ENCODE measurements at regions of chr18 and their contacts with region 1.

Region 1: DNA sequence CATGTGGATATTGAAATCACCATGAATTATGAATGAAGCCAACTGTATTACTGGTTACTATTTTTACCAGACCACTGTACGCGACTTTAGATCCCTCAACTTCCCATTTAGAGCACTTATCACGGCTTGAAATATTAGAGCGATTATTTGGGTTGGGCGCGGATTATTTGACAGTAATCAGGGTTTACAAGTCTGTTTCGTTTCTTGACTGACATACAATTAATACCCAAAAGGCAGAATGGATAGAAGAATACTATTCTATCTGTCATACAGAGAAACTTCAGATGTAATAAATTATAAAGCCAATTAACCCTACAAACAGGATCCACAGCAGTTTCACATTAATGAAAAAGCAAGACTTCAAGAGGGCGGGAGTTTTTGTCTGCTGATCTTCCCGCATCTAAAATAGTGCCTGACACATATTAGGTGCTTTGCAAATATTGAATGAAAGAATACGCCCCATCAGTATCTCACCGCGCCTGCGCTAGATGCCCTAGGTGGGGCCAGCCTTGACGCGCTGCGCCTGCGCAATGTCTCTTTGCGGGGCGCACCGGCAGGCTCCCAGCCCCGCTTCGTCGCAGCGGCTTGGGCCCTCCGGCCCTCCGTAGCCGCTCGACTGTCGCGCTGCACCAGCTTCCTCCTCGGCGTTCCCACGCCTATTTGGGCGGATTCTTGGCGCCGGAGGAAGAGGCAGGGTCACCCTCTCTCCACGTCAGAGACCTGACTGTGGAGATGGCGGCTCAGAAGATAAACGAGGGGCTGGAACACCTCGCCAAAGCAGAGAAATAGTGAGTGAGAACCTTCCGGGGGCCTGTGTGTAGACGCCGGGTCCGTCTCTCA is at the start of gene NAPG:
- DNase-seq: peak; percentile 63 to 94
- H3K4me3 ChIP-seq: peak within 1 kb of the TSS; percentile 74 to 80
- H3K27ac ChIP-seq: peak within 1 kb of the TSS; percentile 89 to 90
- H3K4me1 ChIP-seq: peaks cover 0 to 7% of the 10 kb centered on the region in 2 donors
- H3K27me3 ChIP-seq: no peaks in the 10 kb centered on the region
- CTCF ChIP-seq: no peak
- total RNA-seq, gene NAPG: 31.1 TPM

Region 2: DNA sequence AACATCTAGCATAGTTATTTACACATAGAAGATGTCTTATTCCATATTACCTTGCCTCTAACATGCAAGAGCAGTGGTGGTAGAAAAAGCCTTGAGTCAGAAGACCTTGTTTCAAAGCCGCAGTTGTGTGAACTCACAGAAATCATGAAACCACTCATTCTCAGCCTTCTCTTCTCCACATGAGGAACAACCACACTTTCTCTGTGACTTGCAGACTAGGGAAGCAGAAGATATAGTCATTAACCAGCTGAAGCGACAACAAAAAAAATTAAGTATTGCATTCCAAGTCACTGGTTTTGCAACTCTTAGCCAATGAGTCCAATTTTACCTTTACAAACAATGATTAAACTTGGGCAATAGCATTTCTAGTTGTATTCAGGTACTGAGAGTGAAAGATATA is 1172.0 kb before region 1 on chr18:
- intact Hi-C with region 1: loop called (anchors 10 kb)
- DNase-seq: no peak
- H3K4me3 ChIP-seq: no peak overlapping the region
- H3K27ac ChIP-seq: peak overlapping the region; percentile 70 to 79
- H3K4me1 ChIP-seq: peaks cover 0 to 33% of the 10 kb centered on the region in 2 donors
- H3K27me3 ChIP-seq: no peaks in the 10 kb centered on the region
- CTCF ChIP-seq: no peak

Region 3: DNA sequence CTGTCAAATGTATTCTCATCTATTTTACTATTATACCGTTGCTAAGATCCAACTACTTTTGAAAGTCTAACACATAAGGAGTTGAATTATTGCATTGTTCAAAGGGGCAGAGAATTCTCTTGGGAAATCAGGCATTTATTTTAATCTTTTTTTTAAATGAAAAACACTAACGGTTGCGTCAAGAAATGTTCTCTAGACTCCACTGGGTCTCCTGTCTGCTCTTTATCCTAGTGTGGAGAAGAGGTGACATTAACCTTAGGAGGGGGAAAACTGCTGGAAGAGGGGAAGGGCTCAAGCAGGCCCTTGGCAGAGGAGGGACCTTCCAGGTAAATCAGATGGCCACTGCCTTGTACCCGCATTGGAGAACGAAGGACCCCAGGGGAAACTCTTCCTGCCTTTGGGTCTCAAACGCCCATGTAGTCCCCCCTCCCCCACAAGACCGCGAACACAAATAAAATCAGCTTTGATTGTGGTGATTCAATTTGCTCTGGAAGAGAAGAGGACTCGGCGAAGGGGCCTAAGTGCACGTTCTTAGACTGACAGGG is 72.3 kb before region 1 on chr18:
- intact Hi-C with region 1: no loop called
- DNase-seq: no peak
- H3K4me3 ChIP-seq: peak overlapping the region; percentile 63 to 85
- H3K27ac ChIP-seq: peak overlapping the region; percentile 89 to 91
- H3K4me1 ChIP-seq: peaks cover 0 to 20% of the 10 kb centered on the region in 2 donors
- H3K27me3 ChIP-seq: no peaks in the 10 kb centered on the region
- CTCF ChIP-seq: no peak

Measured in ascending aorta (tissue), 2 donors.